ENCODE measurements at regions of chr16 and their contacts with region 1.

Region 1: GRCh38 chr16:67399181-67399733 is 6.0 kb upstream of the TPPP3 start:
- DNase-seq: peak; percentile 90
- ATAC-seq: peak; percentile 83
- H3K4me3 Mint-ChIP-seq: no peak overlapping the region
- H3K27ac Mint-ChIP-seq: no peak overlapping the region
- H3K4me1 Mint-ChIP-seq: peaks cover 26% of the 10 kb centered on the region
- H3K27me3 Mint-ChIP-seq: peaks cover 44% of the 10 kb centered on the region
- CTCF ChIP-seq: peak; percentile 80; the same call in 1 of the 2 replicates

Region 2: GRCh38 chr16:67246934-67247697 is 152.1 kb before region 1 on chr16 and contains the start of gene FHOD1:
- CTCF ChIA-PET with region 1: interaction called, 12 read pairs
- POLR2A ChIA-PET with region 1: no interaction called
- DNase-seq: peak; percentile 99
- ATAC-seq: peak; percentile 61
- H3K4me3 Mint-ChIP-seq: peak within 1 kb of the TSS; percentile 89
- H3K27ac Mint-ChIP-seq: peak within 1 kb of the TSS; percentile 85
- H3K4me1 Mint-ChIP-seq: peaks cover 34% of the 10 kb centered on the region
- H3K27me3 Mint-ChIP-seq: peaks cover 40% of the 10 kb centered on the region
- CTCF ChIP-seq: no peak
- total RNA-seq, gene FHOD1: 68.9 to 81.3 TPM (median 71.5 TPM) in 3 replicates

Region 3: GRCh38 chr16:67296422-67296821 is 102.8 kb before region 1 on chr16:
- CTCF ChIA-PET with region 1: interaction called, 10 read pairs
- POLR2A ChIA-PET with region 1: interaction called, 4 read pairs
- DNase-seq: no peak
- ATAC-seq: no peak
- H3K4me3 Mint-ChIP-seq: no peak overlapping the region
- H3K27ac Mint-ChIP-seq: no peak overlapping the region
- H3K4me1 Mint-ChIP-seq: no peaks in the 10 kb centered on the region
- H3K27me3 Mint-ChIP-seq: peaks cover 42% of the 10 kb centered on the region
- CTCF ChIP-seq: no peak

Region 4: GRCh38 chr16:67372664-67373063 is 26.6 kb before region 1 on chr16:
- CTCF ChIA-PET with region 1: interaction called, 20 read pairs
- POLR2A ChIA-PET with region 1: no interaction called
- DNase-seq: no peak
- ATAC-seq: no peak
- H3K4me3 Mint-ChIP-seq: no peak overlapping the region
- H3K27ac Mint-ChIP-seq: no peak overlapping the region
- H3K4me1 Mint-ChIP-seq: no peaks in the 10 kb centered on the region
- H3K27me3 Mint-ChIP-seq: peaks cover 9% of the 10 kb centered on the region
- CTCF ChIP-seq: no peak

Region 5: DNA sequence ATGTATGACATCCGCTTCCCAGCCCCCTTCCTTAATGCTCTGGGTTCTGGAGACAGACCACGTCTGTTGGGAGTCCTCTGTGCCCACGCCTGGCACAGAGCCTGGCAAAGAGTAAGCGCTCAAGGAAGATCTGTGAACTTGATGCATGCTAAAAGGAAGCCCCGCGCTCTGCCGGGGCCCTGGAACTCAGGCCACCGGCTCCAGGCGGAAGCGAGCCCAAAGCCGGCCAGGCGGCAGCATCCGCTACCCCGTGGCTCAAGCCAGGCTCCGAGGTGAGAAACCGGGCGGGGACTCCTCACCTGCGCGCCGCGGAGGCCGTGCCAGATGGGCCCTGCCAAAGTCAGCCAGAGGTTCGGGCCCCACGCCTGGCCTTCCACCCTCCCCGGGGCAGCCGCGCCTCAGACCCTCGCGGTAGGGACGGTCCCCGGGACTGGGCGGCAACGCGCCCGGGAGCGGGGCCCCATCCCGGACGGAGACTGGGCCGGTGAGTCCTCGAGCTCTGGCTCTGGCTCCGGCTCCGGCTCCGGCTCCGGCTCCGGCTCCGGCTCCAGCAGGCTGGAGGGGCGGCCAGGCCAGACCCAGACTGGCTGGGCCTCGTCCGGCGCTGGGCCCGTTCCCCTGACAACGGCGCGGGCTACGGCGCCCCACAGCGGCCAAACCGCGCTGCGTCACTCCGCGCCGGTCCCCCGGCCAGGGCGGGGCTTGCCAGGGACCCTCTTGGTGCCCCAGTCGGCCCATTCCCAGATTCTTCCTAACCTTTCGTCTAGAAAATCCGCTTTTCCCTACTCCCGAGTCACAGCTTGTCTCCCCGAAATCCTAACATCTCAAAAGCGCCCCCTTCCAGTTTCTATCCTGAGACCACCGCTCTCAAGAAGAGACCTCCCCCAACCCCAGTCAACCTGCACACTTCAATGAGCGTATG is 16.9 kb after region 1 on chr16 and contains the start of gene ZDHHC1:
- CTCF ChIA-PET with region 1: interaction called, 103 read pairs
- POLR2A ChIA-PET with region 1: no interaction called
- DNase-seq: peak; percentile 83
- ATAC-seq: peak; percentile 89
- H3K4me3 Mint-ChIP-seq: peak within 1 kb of the TSS; percentile 73
- H3K27ac Mint-ChIP-seq: peak within 1 kb of the TSS; percentile 77
- H3K4me1 Mint-ChIP-seq: peaks cover 33% of the 10 kb centered on the region
- H3K27me3 Mint-ChIP-seq: peaks cover 20% of the 10 kb centered on the region
- CTCF ChIP-seq: no peak
- total RNA-seq, gene ZDHHC1: 4.2 to 4.9 TPM (median 4.6 TPM) in 3 replicates

Region 6: DNA sequence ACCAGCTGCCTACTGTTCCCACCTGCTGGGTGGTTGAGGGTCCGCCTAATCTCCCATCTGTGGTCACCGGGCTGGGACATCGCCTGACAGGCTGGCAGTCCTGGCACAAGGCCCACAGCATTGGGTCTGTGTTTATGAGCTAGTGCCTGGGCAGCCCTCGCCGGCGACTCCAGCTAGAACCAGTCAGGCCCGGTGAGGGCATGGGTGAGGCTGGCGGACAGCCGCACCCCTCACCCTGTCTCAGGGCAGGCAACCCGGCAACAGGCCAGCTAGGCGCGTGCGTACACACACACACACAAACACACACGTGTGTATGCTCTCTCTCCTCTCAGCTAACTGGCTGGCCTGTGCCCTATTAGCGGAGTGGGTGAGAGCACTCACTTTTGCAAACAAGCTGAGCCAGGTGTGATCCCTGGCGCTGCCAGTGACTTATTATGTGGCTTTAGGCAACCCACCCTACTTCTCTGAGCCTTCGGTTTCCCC is 42.1 kb after region 1 on chr16:
- CTCF ChIA-PET with region 1: interaction called, 12 read pairs
- POLR2A ChIA-PET with region 1: no interaction called
- DNase-seq: no peak
- ATAC-seq: no peak
- H3K4me3 Mint-ChIP-seq: no peak overlapping the region
- H3K27ac Mint-ChIP-seq: no peak overlapping the region
- H3K4me1 Mint-ChIP-seq: peaks cover 6% of the 10 kb centered on the region
- H3K27me3 Mint-ChIP-seq: no peaks in the 10 kb centered on the region
- CTCF ChIP-seq: no peak

Region 7: DNA sequence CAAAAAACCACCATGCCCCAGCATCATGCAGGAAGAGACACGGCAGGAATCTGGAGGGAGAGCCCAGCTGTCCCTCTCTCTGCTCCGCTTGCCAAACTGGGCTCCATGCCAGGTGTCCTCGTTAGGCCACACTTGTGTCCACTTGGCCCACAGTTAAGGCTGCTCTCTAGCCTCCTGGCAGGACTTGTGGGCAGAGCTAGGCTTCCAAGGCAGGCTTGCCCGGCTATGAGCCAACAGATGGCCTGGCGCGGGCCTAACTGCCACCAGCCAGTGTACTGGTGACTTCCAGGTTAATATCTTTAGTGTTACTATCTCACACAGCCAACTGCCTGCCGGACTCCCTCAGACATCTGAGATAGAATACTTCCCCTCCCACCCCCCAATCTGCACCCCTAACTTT is 71.1 kb after region 1 on chr16:
- CTCF ChIA-PET with region 1: interaction called, 14 read pairs
- POLR2A ChIA-PET with region 1: no interaction called
- DNase-seq: no peak
- ATAC-seq: no peak
- H3K4me3 Mint-ChIP-seq: no peak overlapping the region
- H3K27ac Mint-ChIP-seq: no peak overlapping the region
- H3K4me1 Mint-ChIP-seq: peaks cover 3% of the 10 kb centered on the region
- H3K27me3 Mint-ChIP-seq: no peaks in the 10 kb centered on the region; the same call in 1 of the 2 replicates
- CTCF ChIP-seq: no peak

Region 8: DNA sequence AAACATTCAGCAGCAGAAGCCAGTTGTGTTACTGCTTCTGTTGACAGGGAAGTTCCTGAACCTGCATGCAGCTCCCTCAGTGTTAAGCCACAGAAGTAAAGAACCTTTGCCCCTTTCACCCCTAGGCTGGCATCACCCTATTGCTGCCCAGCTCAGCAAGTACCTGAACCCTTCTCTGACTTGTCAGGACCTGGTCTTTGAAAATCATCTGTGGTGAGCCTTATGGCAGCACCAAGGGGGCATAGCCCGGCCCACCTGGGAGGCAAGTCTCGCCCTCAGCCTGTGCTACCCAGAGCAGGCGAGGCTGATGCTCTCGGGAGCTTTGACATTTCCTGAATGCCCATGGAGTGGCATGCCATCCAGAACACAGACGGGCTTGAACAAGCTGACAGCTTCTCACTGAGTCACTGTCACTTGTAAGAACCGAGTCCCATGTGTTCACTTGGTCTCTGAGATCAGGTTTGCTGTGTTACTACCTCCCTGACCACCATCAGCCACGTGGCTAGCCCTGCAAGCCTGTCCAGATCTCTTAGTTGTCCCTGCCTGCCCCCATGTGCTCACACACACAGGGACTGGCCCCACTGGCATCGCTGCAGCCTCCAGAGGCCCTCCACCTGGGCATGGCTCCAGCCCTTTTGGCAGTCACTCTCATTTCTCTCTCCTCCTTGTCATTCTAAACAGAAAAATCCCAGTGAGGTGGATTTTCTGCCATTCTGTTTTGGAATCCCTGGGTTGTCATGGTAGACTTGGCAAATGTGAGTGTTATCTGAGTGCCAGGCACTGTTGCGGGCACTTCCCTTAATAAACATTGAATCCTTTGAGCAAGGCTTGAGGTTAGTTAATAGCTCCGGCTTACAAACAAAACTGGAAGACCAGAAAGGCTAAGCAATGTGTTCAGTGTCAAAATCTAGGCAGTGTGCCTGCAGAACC is 242.8 kb after region 1 on chr16:
- CTCF ChIA-PET with region 1: no interaction called
- POLR2A ChIA-PET with region 1: no interaction called
- DNase-seq: no peak
- ATAC-seq: no peak
- H3K4me3 Mint-ChIP-seq: no peak overlapping the region
- H3K27ac Mint-ChIP-seq: no peak overlapping the region
- H3K4me1 Mint-ChIP-seq: no peaks in the 10 kb centered on the region; the same call in 1 of the 2 replicates
- H3K27me3 Mint-ChIP-seq: peaks cover 26% of the 10 kb centered on the region
- CTCF ChIP-seq: no peak

Region 9: GRCh38 chr16:67667817-67668494 is 268.7 kb after region 1 on chr16:
- CTCF ChIA-PET with region 1: no interaction called
- POLR2A ChIA-PET with region 1: no interaction called
- DNase-seq: peak; percentile 82
- ATAC-seq: peak; percentile 66
- H3K4me3 Mint-ChIP-seq: peak overlapping the region; percentile 84; the same call in 1 of the 2 replicates
- H3K27ac Mint-ChIP-seq: no peak overlapping the region
- H3K4me1 Mint-ChIP-seq: peaks cover 11% of the 10 kb centered on the region
- H3K27me3 Mint-ChIP-seq: peaks cover 6% of the 10 kb centered on the region
- CTCF ChIP-seq: no peak